ENCODE measurements at regions of chr2 and their contacts with region 1.

Region 1: GRCh38 chr2:205511221-205511620 is 171.1 kb upstream of the NRP2 start:
- DNase-seq: no peak
- H3K4me3 ChIP-seq: no peak overlapping the region
- H3K4me3 Mint-ChIP-seq: peak overlapping the region; percentile 14
- H3K27ac Mint-ChIP-seq: peak overlapping the region; percentile 24
- H3K4me1 ChIP-seq: peaks cover 42% of the 10 kb centered on the region
- H3K4me1 Mint-ChIP-seq: peaks cover 54% of the 10 kb centered on the region
- H3K27me3 ChIP-seq: no peaks in the 10 kb centered on the region
- H3K27me3 Mint-ChIP-seq: no peaks in the 10 kb centered on the region
- CTCF ChIP-seq: no peak

Region 2: DNA sequence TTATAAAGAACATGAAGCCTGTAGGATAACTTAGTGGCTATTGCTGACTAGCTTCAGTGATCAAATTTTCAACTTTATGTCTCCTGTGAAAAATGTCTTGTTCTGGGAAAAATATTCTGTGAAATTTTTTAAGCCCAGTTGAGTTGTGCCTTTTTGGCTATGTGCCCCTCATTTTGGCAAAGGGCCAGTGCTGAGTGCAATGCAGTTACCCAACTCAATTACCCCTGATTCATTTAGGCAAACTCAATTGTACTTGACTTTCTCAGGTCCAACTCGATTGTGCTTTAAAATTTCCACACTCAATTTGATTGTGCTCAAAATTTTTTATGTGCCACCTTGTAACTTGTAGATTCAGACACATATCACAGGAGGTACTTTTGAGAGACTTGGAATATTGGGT is 377.7 kb before region 1 on chr2:
- CTCF ChIA-PET with region 1: no interaction called
- POLR2A ChIA-PET with region 1: no interaction called
- intact Hi-C with region 1: no loop called
- DNase-seq: no peak
- H3K4me3 ChIP-seq: no peak overlapping the region
- H3K4me3 Mint-ChIP-seq: no peak overlapping the region
- H3K27ac Mint-ChIP-seq: no peak overlapping the region
- H3K4me1 ChIP-seq: no peaks in the 10 kb centered on the region
- H3K4me1 Mint-ChIP-seq: no peaks in the 10 kb centered on the region
- H3K27me3 ChIP-seq: no peaks in the 10 kb centered on the region
- H3K27me3 Mint-ChIP-seq: no peaks in the 10 kb centered on the region
- CTCF ChIP-seq: no peak

Region 3: GRCh38 chr2:205216580-205216979 is 294.6 kb before region 1 on chr2:
- CTCF ChIA-PET with region 1: no interaction called
- POLR2A ChIA-PET with region 1: no interaction called
- intact Hi-C with region 1: loop called (anchors 2 kb)
- DNase-seq: peak; percentile 46 to 56
- H3K4me3 ChIP-seq: no peak overlapping the region
- H3K4me3 Mint-ChIP-seq: no peak overlapping the region
- H3K27ac Mint-ChIP-seq: peak overlapping the region; percentile 78
- H3K4me1 ChIP-seq: peaks cover 57% of the 10 kb centered on the region
- H3K4me1 Mint-ChIP-seq: peaks cover 46% of the 10 kb centered on the region
- H3K27me3 ChIP-seq: no peaks in the 10 kb centered on the region
- H3K27me3 Mint-ChIP-seq: no peaks in the 10 kb centered on the region
- CTCF ChIP-seq: no peak

Region 4: GRCh38 chr2:205366336-205367060 is 144.7 kb before region 1 on chr2:
- CTCF ChIA-PET with region 1: no interaction called
- POLR2A ChIA-PET with region 1: no interaction called
- intact Hi-C with region 1: loop called (anchors 1 kb)
- DNase-seq: peak; percentile 63 to 82
- H3K4me3 ChIP-seq: no peak overlapping the region
- H3K4me3 Mint-ChIP-seq: peak overlapping the region; percentile 36
- H3K27ac Mint-ChIP-seq: peak overlapping the region; percentile 71
- H3K4me1 ChIP-seq: peaks cover 36% of the 10 kb centered on the region
- H3K4me1 Mint-ChIP-seq: peaks cover 52% of the 10 kb centered on the region
- H3K27me3 ChIP-seq: no peaks in the 10 kb centered on the region
- H3K27me3 Mint-ChIP-seq: no peaks in the 10 kb centered on the region
- CTCF ChIP-seq: no peak